Posterior vena cava (tissue), 2 donors: ENCODE measurements at regions of chr1 and their contacts with region 1.

Region 1: DNA sequence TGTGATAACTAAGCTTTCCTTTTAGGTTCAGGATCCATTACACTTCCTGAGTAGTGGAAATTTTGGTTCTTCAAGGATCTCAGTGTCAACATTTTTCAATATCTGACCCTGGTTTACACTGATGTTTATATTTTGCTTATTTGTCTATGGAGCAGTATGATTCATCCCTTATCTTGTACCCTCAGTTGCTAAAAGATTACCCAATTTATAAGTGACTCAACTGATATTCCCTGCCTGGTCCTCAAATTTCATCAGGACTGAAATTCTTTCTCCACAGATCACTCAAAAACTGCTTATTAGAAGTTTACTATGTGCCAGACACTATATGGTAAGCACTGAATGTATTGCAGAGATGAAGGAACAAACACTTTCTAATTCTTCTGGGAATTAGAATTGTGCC is 139.1 kb upstream of the CHRM3 start:
- DNase-seq: no peak

Region 2: GRCh38 chr1:238589843-238590435 is 657.4 kb before region 1 on chr1:
- intact Hi-C with region 1: loop called in 1 of 2 experiments (anchors 5 kb)
- DNase-seq: no peak